ENCODE measurements at regions of chr19 and their contacts with region 1.

Region 1: GRCh38 chr19:29665215-29665825 is at the start of gene PLEKHF1:
- DNase-seq: peak; percentile 81 to 85 (median 82)
- H3K4me3 ChIP-seq: peak within 1 kb of the TSS; percentile 91
- H3K4me3 Mint-ChIP-seq: peak within 1 kb of the TSS; percentile 88 to 98 (median 93)
- H3K27ac ChIP-seq: peak within 1 kb of the TSS; percentile 69
- H3K27ac Mint-ChIP-seq: peak within 1 kb of the TSS; percentile 89 to 100 (median 98)
- H3K4me1 ChIP-seq: peaks cover 50% of the 10 kb centered on the region
- H3K4me1 Mint-ChIP-seq: peaks cover 37 to 43% (median 42%) of the 10 kb centered on the region in 3 donors
- H3K27me3 ChIP-seq: no peaks in the 10 kb centered on the region
- H3K27me3 Mint-ChIP-seq: no peaks in the 10 kb centered on the region
- total RNA-seq, gene PLEKHF1: 21.3 to 23.0 TPM

Region 2: GRCh38 chr19:29622138-29623070 is 42.9 kb before region 1 on chr19:
- CTCF ChIA-PET with region 1: interaction called, 56 read pairs
- POLR2A ChIA-PET with region 1: interaction called, 9 read pairs
- DNase-seq: peak; percentile 30 to 64 (median 38)
- H3K4me3 ChIP-seq: peak overlapping the region; percentile 0
- H3K4me3 Mint-ChIP-seq: peak overlapping the region; percentile 33 to 84 (median 76)
- H3K27ac ChIP-seq: no peak overlapping the region
- H3K27ac Mint-ChIP-seq: peak overlapping the region; percentile 85 to 97 (median 97)
- H3K4me1 ChIP-seq: peaks cover 54% of the 10 kb centered on the region
- H3K4me1 Mint-ChIP-seq: peaks cover 54 to 63% (median 61%) of the 10 kb centered on the region in 3 donors
- H3K27me3 ChIP-seq: no peaks in the 10 kb centered on the region
- H3K27me3 Mint-ChIP-seq: no peaks in the 10 kb centered on the region

Region 3: GRCh38 chr19:29680447-29680846 is 15.1 kb after region 1 on chr19:
- CTCF ChIA-PET with region 1: interaction called, 85 read pairs
- POLR2A ChIA-PET with region 1: interaction called, 17 read pairs
- DNase-seq: peak; percentile 79 to 90 (median 86)
- H3K4me3 ChIP-seq: peak overlapping the region; percentile 50
- H3K4me3 Mint-ChIP-seq: peak overlapping the region; percentile 26 to 83 (median 78)
- H3K27ac ChIP-seq: peak overlapping the region; percentile 25
- H3K27ac Mint-ChIP-seq: peak overlapping the region; percentile 81 to 97 (median 94)
- H3K4me1 ChIP-seq: peaks cover 73% of the 10 kb centered on the region
- H3K4me1 Mint-ChIP-seq: peaks cover 64 to 81% (median 75%) of the 10 kb centered on the region in 3 donors
- H3K27me3 ChIP-seq: no peaks in the 10 kb centered on the region
- H3K27me3 Mint-ChIP-seq: no peaks in the 10 kb centered on the region

Region 4: GRCh38 chr19:29834970-29835846 is 169.9 kb after region 1 on chr19:
- CTCF ChIA-PET with region 1: no interaction called
- POLR2A ChIA-PET with region 1: interaction called, 14 read pairs
- DNase-seq: no peak
- H3K4me3 ChIP-seq: no peak overlapping the region
- H3K4me3 Mint-ChIP-seq: peak overlapping the region in 1 of 7 donors; percentile 35
- H3K27ac ChIP-seq: no peak overlapping the region
- H3K27ac Mint-ChIP-seq: no peak overlapping the region
- H3K4me1 ChIP-seq: peaks cover 58% of the 10 kb centered on the region
- H3K4me1 Mint-ChIP-seq: peaks cover 37 to 46% (median 43%) of the 10 kb centered on the region in 3 donors
- H3K27me3 ChIP-seq: no peaks in the 10 kb centered on the region
- H3K27me3 Mint-ChIP-seq: peaks cover 0 to 3% of the 10 kb centered on the region in 2 donors